Activated CD8-positive, alpha-beta T cell treated with anti-CD3 and anti-CD28 coated beads for 36 hours (primary cell): ENCODE measurements at regions of chr14 and their contacts with region 1.

Region 1: DNA sequence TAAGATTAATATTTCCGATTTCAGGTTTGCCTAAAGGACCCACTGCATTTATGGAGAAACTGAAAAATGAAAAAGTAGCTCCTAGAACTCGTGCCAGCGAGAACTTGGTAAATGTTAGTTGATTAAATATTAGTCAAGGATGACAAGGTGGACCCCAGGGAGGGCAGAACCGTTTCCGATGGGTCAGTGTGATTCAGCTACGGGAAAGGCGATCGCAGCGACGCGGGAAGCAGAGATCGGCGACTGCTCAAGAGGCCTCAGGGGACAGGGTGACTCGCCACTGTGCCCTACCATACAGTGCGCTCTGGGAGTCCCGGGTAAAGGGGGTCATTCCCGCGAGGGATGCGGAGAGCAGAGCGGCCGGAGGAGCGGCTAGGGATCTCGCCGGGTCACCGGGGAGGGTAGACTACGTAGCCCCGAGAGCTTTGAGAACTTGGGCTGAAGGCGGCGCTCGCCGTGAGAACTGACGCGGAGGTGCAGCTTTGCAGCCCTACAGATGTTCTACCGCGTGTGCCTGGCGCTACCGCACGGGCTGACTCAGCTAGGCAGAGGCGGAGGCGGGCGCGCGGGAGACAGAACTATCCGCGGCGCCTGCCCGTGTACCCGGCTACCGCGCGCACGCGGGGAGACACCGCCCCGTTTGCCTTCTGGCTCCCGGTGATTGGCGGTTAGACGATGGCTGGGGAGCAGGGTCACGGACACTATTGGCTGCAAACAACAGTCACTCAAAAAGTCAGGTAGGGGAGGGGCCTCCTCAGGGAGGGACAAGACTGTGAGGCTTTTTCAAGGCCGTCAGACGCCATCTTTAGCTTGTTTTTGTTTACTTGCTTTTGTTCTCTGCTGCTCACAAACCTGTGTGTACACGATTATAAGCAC is 3.2 kb downstream of the C14orf93 start:
- DNase-seq: peak; percentile 98
- ATAC-seq: peak; percentile 96
- H3K4me3 Mint-ChIP-seq: peak overlapping the region; percentile 91
- H3K27ac Mint-ChIP-seq: peak overlapping the region; percentile 97
- H3K4me1 Mint-ChIP-seq: peaks cover 34% of the 10 kb centered on the region
- H3K27me3 Mint-ChIP-seq: no peaks in the 10 kb centered on the region
- CTCF ChIP-seq: peak; percentile 39

Region 2: DNA sequence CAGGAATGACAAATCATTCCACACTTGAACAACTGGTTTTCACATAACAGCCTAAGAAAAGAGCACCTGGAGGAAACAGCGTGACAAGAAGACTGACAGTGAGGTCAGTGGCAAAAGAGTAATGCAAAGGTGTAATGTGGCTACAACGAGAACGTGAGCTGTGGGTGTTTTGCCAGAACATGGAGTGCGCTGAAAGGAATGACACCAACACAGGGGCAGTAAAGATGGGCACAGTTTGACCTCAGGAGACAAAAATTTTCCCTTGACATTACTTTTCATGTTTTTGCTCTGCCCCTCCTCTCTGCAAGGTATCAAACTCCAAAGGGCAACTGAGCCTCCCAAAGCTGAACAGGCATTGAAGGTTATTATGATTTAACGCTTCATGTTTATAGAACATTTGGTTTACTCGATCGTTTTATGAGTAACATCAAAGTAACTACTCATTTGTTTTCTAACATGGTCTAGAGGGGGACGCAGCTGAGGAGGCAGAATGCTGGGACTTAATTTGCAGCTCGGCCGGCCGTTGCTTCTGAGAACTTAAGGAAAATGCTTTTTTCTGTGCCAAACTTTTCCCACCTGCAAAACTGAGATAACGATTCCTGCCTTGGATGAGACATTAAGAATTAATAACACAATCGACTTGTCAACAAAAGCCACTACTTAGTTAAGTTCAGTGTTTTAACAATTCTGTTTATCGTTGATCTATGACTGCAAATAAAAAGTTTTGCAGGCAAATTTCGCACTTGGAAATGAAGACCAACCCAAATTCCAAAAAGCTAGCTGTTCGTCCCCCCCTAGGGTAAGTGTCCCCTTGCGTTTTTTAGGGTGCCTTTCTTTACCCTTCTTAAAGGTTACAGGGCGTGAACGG is 50.8 kb before region 1 on chr14:
- CTCF ChIA-PET with region 1: interaction called, 5 read pairs
- POLR2A ChIA-PET with region 1: interaction called, 11 read pairs
- intact Hi-C with region 1: no loop called
- DNase-seq: no peak
- ATAC-seq: no peak
- H3K4me3 Mint-ChIP-seq: peak overlapping the region; percentile 93
- H3K27ac Mint-ChIP-seq: peak overlapping the region; percentile 93
- H3K4me1 Mint-ChIP-seq: peaks cover 25% of the 10 kb centered on the region
- H3K27me3 Mint-ChIP-seq: no peaks in the 10 kb centered on the region
- CTCF ChIP-seq: no peak

Region 3: GRCh38 chr14:23025151-23025814 is 18.5 kb after region 1 on chr14:
- CTCF ChIA-PET with region 1: interaction called, 14 read pairs
- POLR2A ChIA-PET with region 1: interaction called, 27 read pairs
- intact Hi-C with region 1: no loop called
- DNase-seq: peak; percentile 61
- ATAC-seq: peak; percentile 74
- H3K4me3 Mint-ChIP-seq: peak overlapping the region; percentile 3
- H3K27ac Mint-ChIP-seq: peak overlapping the region; percentile 84
- H3K4me1 Mint-ChIP-seq: peaks cover 65% of the 10 kb centered on the region
- H3K27me3 Mint-ChIP-seq: no peaks in the 10 kb centered on the region
- CTCF ChIP-seq: no peak

Region 4: GRCh38 chr14:23034483-23035302 is 27.9 kb after region 1 on chr14 and contains the start of gene PSMB5:
- CTCF ChIA-PET with region 1: interaction called, 14 read pairs
- POLR2A ChIA-PET with region 1: interaction called, 19 read pairs
- intact Hi-C with region 1: loop called (anchors 1 kb)
- DNase-seq: peak; percentile 96
- ATAC-seq: peak; percentile 96
- H3K4me3 Mint-ChIP-seq: peak within 1 kb of the TSS; percentile 92
- H3K27ac Mint-ChIP-seq: peak within 1 kb of the TSS; percentile 98
- H3K4me1 Mint-ChIP-seq: peaks cover 31% of the 10 kb centered on the region
- H3K27me3 Mint-ChIP-seq: no peaks in the 10 kb centered on the region
- CTCF ChIP-seq: no peak
- total RNA-seq, gene PSMB5: 119 to 120 TPM

Region 5: DNA sequence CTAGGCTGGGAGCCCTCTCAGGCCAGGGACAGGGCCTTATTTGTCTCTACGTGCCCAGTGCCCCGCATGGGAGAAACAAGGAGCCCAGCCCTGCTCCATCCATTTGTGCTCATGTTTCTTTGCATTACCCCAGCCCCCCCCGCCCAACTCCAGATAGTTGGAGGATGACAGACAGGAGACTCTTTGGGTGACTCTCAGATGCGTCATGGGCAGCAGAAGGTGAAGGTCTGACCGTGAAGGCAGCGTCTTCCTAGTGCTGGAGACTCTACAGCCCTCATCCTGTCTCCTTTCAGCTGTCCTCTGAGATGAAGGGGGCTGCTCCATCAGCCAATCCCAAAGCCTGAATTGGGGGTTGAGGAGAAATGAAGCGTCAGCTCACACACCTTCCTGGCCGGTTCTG is 34.9 kb after region 1 on chr14:
- CTCF ChIA-PET with region 1: interaction called, 5 read pairs
- POLR2A ChIA-PET with region 1: interaction called, 11 read pairs
- intact Hi-C with region 1: no loop called
- DNase-seq: no peak
- ATAC-seq: no peak
- H3K4me3 Mint-ChIP-seq: no peak overlapping the region
- H3K27ac Mint-ChIP-seq: no peak overlapping the region
- H3K4me1 Mint-ChIP-seq: peaks cover 1% of the 10 kb centered on the region
- H3K27me3 Mint-ChIP-seq: no peaks in the 10 kb centered on the region
- CTCF ChIP-seq: no peak